ENCODE measurements at regions of chr16 and their contacts with region 1.

Region 1: GRCh38 chr16:30445408-30446202 is at the start of gene SEPHS2:
- DNase-seq: peak; percentile 97
- ATAC-seq: peak; percentile 52
- H3K4me3 ChIP-seq: peak within 1 kb of the TSS; percentile 86 to 92 (median 91)
- H3K27ac ChIP-seq: peak within 1 kb of the TSS; percentile 95
- H3K4me1 ChIP-seq: peaks cover 94% of the 10 kb centered on the region
- H3K27me3 ChIP-seq: no peaks in the 10 kb centered on the region; a peak in 1 of 5 replicates
- CTCF ChIP-seq: peak; percentile 55
- EP300 ChIP-seq: peak in 1 of 2 experiments; percentile 41; a peak in 1 of 4 replicates
- POLR2A ChIP-seq: peak; percentile 92 to 100
- RAD21 ChIP-seq: peak; percentile 46
- total RNA-seq, gene SEPHS2: 20.7 and 56.3 TPM in 2 replicates

Region 2: DNA sequence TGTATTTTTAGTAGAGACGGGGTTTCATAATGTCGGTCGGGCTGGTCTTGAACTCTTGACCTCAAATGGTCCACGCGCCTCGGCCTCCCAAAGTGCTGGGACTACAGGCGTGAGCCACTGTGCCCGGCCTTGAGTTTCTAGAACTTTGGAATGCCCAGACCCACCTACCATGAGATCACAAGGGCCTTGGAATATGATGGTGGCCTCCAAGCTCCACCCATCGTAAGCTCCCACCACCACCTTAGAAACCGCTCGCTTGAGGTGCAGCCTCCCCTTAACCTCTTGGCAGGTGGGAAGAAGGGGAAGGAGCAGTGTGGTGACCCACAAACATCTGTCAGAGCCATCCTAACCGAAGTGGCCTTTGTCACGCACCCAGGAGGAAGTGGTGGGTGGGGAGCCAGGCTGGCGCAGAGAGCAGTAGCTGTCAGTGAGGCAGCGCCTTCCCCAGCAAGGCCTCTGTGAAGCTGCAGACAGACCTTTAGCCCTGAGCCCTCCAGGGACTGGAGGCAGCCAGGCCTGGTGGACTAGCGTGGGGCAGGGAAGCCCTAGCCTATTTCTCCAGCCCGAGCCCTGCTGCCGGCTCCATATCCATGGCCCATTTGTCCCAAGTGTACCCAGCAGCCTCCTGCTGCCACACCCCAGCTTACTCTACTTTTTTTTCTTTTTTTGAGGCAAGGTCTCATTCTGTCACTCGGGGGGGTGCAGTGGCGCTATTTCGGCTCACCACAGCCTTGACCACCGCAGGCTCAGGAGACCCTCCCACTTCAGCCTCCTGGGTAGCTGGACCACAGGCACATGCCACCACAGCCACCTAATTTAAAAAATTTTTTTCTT is 13.2 kb after region 1 on chr16:
- CTCF ChIA-PET with region 1: no interaction called
- POLR2A ChIA-PET with region 1: interaction called, 11 read pairs
- in situ Hi-C with region 1: no loop called
- intact Hi-C with region 1: no loop called
- DNase-seq: peak; percentile 63
- ATAC-seq: peak; percentile 98
- H3K4me3 ChIP-seq: peak overlapping the region; percentile 41 to 68 (median 54)
- H3K27ac ChIP-seq: peak overlapping the region; percentile 67
- H3K4me1 ChIP-seq: peaks cover 63% of the 10 kb centered on the region
- H3K27me3 ChIP-seq: no peaks in the 10 kb centered on the region
- CTCF ChIP-seq: peak; percentile 37
- EP300 ChIP-seq: no peak
- POLR2A ChIP-seq: peak; percentile 55 to 66; a peak in 3 of 4 replicates
- RAD21 ChIP-seq: no peak

Region 3: GRCh38 chr16:30526823-30527635 is 81.4 kb after region 1 on chr16:
- CTCF ChIA-PET with region 1: no interaction called
- POLR2A ChIA-PET with region 1: interaction called, 11 read pairs
- in situ Hi-C with region 1: no loop called
- intact Hi-C with region 1: loop called (anchors 2 kb)
- DNase-seq: peak; percentile 97
- ATAC-seq: peak; percentile 89
- H3K4me3 ChIP-seq: peak overlapping the region; percentile 78 to 97 (median 87)
- H3K27ac ChIP-seq: peak overlapping the region; percentile 98
- H3K4me1 ChIP-seq: peaks cover 61% of the 10 kb centered on the region
- H3K27me3 ChIP-seq: no peaks in the 10 kb centered on the region; a peak in 1 of 5 replicates
- CTCF ChIP-seq: peak; percentile 54
- EP300 ChIP-seq: peak in 1 of 2 experiments; percentile 31; a peak in 1 of 4 replicates
- POLR2A ChIP-seq: peak; percentile 70 to 76
- RAD21 ChIP-seq: peak; percentile 75

Region 4: DNA sequence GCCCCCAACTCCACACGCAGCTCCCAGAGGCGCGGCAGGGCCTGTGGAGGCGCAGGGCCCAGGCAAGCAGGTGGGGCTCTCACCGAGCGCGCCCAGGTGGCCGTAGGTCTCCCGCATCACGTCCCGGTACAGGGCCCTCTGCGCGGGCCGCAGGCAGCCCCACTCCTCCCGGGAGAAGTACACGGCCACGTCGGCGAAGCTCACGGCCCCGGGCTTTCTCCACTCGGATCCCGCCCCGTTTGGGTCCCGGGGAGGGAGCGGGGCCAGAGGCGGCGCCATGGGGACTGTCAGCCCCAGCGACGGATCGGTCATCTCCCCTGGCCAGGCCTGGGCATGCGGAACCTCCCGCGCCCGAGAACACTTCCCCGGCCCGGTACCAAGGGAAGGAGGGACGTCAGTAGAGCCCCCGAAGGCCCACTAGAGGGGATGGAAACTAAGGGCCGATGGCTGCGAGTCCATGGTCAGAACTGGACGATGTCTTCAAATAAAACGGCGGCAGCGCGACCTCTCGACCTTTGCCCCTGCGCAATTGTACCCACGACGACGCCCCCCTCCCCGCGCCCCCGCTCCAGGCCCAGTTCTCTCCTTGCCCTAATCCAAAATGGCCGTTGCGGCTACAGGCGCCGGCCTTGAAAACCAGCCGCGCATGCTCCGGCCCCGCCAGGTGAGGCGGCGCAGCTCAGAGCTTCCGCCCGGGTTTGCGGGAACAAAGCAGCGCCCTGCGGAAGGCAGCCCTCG is 88.9 kb after region 1 on chr16 and contains the start of gene ZNF747:
- CTCF ChIA-PET with region 1: no interaction called
- POLR2A ChIA-PET with region 1: interaction called, 36 read pairs
- in situ Hi-C with region 1: no loop called
- intact Hi-C with region 1: no loop called
- DNase-seq: peak; percentile 92
- ATAC-seq: peak; percentile 84
- H3K4me3 ChIP-seq: peak within 1 kb of the TSS; percentile 75 to 93 (median 81)
- H3K27ac ChIP-seq: peak within 1 kb of the TSS; percentile 85
- H3K4me1 ChIP-seq: peaks cover 68% of the 10 kb centered on the region
- H3K27me3 ChIP-seq: no peaks in the 10 kb centered on the region; a peak in 1 of 5 replicates
- CTCF ChIP-seq: peak; percentile 47
- EP300 ChIP-seq: peak; percentile 22 to 47; a peak in 2 of 4 replicates
- POLR2A ChIP-seq: peak; percentile 72 to 87
- RAD21 ChIP-seq: no peak; the same call in none of the 2 replicates
- total RNA-seq, gene ZNF747: 8.8 and 10.2 TPM in 2 replicates

Region 5: GRCh38 chr16:30602616-30603277 is 157.1 kb after region 1 on chr16:
- CTCF ChIA-PET with region 1: interaction called, 11 read pairs
- POLR2A ChIA-PET with region 1: interaction called, 4 read pairs
- in situ Hi-C with region 1: no loop called
- intact Hi-C with region 1: no loop called
- DNase-seq: no peak
- ATAC-seq: no peak
- H3K4me3 ChIP-seq: no peak overlapping the region
- H3K27ac ChIP-seq: no peak overlapping the region
- H3K4me1 ChIP-seq: peaks cover 27% of the 10 kb centered on the region
- H3K27me3 ChIP-seq: no peaks in the 10 kb centered on the region
- CTCF ChIP-seq: no peak
- EP300 ChIP-seq: no peak
- POLR2A ChIP-seq: 0 out of 4 replicates have a peak, but pooled peaks of 1 of the 2 experiments have one; percentile 29
- RAD21 ChIP-seq: no peak